Posterior vena cava (tissue), 2 donors: ENCODE measurements at regions of chr18 and their contacts with region 1.

Region 1: DNA sequence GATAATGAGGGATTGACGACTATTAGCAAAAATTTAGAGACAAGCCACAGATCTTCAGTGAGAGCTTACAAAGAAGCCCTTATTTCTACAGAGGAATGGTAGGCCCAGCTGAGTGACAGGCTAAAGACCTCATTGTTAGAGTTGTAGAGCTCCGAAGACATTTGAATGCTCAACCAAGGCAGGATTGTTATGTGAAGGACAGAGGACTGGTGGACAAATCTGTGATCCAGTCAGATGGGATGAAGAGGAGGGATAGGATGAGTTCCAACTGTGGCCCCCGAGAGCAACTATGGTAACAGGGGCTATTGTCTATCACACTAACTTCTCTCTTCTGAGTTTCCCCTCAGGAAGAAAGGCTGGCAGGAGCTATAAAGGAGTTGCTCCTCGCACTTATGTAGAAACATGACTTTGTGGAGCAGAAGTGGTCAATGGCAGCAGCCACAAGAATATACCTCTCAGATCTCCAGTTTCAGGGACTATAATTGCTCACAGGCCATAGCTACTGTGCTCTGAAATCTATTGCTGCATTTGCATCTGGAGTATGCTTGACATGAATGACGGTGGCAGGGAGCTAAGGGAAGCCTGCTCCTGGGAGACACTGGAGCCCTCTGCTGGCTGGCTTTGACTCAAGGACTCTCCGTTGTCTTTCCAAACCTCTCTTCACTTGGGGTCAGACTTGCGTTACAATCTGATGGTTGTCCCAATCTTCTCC is 50.3 kb upstream of the GREB1L start:
- DNase-seq: no peak

Region 2: DNA sequence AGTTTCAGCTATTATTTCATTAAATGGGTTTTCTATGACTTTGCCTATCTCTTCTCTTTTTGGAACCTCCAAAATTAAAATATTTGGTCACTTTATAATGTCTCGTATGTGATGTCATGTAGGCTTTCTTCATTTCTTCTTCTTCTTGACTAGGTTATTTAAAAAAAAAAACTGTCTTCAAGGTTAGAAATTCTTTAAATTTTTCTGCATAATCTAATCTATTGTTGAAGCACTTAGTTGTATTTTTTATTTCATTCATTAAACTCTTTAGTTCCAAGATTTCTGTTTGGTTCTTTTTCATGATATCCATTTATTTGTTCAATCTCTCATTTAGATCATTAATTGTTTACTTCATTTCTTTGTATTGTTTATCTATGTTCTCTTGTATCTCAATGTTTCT is 36.3 kb before region 1 on chr18:
- intact Hi-C with region 1: no loop called
- DNase-seq: no peak

Region 3: DNA sequence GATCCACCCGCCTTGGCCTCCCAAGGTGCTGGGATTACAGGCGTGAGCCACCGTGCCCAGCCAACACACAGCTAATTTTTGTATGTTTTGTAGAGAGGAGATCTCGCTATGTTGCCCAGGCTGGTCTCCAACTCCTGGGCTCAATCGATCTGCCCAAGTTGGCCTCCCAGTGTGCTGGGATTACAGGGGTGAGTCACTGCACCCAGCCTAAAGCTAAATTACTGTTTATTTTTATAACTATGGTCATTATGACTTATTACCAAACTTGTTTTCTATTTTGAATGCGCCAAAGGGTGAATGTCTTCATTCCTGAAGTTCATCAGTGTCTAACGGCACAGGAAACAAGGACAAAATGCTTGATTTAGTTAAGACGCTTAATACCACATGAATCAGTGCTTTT is 11.3 kb after region 1 on chr18:
- intact Hi-C with region 1: loop called in 1 of 2 experiments (anchors 1 kb)
- DNase-seq: no peak

Region 4: GRCh38 chr18:21444465-21445023 is 252.8 kb after region 1 on chr18:
- intact Hi-C with region 1: loop called (anchors 10 kb)
- DNase-seq: no peak